ENCODE measurements at regions of chr1 and their contacts with region 1.

Region 1: GRCh38 chr1:74733604-74734484 is 892 bp downstream of the TYW3 start:
- H3K4me3 ChIP-seq: peak overlapping the region; percentile 73
- H3K27ac ChIP-seq: peak overlapping the region; percentile 73
- H3K4me1 ChIP-seq: no peaks in the 10 kb centered on the region
- CTCF ChIP-seq: no peak

Region 2: DNA sequence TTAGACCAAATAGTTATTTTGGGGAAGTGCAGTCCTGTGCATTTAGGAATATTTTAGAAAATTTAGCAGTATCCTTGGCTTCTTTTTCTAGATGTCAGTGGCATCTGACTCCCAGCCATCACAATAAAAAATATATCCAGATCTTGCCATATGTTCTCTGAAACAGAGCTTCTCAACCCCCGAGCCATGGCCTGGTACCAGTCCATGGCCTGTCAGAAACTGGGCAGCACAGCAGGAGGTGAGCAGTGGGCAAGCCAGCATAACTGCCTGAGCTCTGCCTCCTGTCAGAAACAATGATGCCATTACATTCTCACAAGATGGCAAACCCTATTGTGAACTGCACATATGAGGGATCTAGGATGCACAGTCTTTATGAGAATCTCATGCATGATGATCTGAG is 1015.9 kb before region 1 on chr1:
- CTCF ChIA-PET with region 1: no interaction called
- POLR2A ChIA-PET with region 1: no interaction called
- H3K4me3 ChIP-seq: no peak overlapping the region
- H3K27ac ChIP-seq: no peak overlapping the region
- H3K4me1 ChIP-seq: no peaks in the 10 kb centered on the region
- CTCF ChIP-seq: no peak

Region 3: DNA sequence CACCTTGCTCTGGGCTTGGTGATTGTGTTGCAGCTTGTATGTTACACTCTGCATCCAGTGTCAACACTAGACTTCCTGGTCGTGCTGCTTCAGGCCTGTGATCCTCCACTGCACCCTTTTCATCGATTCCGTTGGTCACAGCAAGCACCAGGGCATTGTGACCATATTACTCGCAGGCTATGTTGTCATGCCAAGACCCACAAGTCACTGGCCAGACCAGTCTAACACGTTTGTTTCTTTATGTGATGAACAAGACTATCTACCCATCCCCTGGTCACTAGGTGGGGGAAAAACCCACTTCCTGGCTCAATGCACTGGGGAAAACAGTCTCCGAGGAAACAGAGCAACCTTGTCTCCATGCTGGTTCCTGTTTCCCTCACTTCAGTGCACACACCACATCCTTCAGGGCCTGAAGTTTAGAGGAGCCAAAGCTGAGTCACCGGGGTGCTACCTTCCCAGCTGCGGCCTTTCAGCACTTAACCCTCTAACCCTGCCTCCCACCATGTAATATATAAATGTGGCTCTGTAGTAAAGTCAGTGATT is 81.2 kb before region 1 on chr1:
- CTCF ChIA-PET with region 1: no interaction called
- POLR2A ChIA-PET with region 1: no interaction called
- H3K4me3 ChIP-seq: no peak overlapping the region
- H3K27ac ChIP-seq: no peak overlapping the region
- H3K4me1 ChIP-seq: no peaks in the 10 kb centered on the region
- CTCF ChIP-seq: no peak

Region 4: DNA sequence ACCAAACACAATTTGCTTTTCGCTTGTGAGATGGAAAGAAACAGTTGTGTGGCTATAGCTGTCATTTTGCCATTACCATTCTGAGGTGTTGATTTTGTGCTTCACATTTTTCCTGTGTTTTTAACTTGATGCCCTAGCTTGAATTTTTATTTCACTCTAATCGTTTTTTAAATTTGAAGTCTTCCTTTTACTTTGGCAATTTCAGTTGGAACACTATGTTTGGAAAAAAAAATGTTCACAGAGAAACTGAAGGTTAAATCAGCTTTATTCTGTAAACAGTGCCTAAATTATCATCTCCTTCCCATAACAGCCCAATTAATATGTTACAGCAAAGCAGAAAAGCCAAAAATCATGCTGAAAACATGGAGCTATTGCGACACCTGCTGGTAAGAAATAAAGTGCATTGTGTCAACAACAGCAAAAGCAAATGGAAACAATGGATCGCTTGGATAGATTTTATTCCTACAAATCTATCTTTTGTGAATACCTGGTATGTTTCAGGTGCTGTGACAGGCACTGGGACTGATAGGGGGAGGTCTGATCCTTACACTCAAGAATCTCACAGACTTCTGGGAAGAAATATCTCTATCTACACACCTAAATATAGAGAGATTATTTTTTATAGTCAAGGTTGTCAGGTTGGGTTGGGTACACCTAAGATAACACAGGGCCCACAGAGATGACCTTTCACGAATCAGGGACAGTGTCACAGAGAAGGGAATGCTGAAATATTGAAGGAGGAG is 44.1 kb before region 1 on chr1:
- CTCF ChIA-PET with region 1: interaction called, 21 read pairs
- POLR2A ChIA-PET with region 1: no interaction called
- H3K4me3 ChIP-seq: no peak overlapping the region
- H3K27ac ChIP-seq: no peak overlapping the region
- H3K4me1 ChIP-seq: no peaks in the 10 kb centered on the region
- CTCF ChIP-seq: 0 out of 2 replicates have a peak, but pooled peaks have one; percentile 51

Region 5: GRCh38 chr1:74697832-74698231 is 36.0 kb before region 1 on chr1:
- CTCF ChIA-PET with region 1: interaction called, 12 read pairs
- POLR2A ChIA-PET with region 1: no interaction called
- H3K4me3 ChIP-seq: no peak overlapping the region
- H3K27ac ChIP-seq: no peak overlapping the region
- H3K4me1 ChIP-seq: no peaks in the 10 kb centered on the region
- CTCF ChIP-seq: no peak

Region 6: DNA sequence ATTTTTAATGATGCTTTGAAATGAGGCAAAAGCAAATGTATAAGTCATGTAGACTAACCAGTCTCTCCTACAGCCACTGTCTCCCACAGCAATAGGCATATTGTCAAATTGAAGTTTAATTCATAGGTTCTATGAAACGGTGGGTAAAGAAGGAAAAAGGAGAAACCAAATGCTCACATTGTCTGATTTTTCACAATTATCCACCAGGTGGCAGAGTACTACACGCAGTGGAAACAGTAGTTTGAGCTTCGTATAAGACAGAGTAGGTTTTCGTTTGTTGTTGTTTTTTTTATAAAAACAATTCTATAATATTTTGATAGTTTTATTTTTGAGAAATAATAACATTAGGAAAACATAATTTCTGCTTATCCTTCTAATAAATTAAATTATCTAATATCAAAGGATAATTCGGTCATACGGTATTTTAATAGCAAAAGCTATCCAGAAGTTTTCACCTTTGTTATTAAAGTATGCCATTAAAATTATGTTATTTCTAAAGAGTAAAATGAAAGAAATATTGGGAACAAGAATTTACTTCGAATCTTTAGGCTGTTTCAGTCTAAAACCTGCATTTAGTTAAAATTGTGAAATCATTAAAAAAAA is 38.2 kb after region 1 on chr1:
- CTCF ChIA-PET with region 1: interaction called, 15 read pairs
- POLR2A ChIA-PET with region 1: no interaction called
- H3K4me3 ChIP-seq: no peak overlapping the region
- H3K27ac ChIP-seq: no peak overlapping the region
- H3K4me1 ChIP-seq: no peaks in the 10 kb centered on the region
- CTCF ChIP-seq: no peak; the same call in 1 of the 2 replicates